HEK293T (cell line): ENCODE measurements at regions of chr4 and their contacts with region 1.

Region 1: GRCh38 chr4:42371306-42372252 is 25.7 kb upstream of the SHISA3 start:
- DNase-seq: peak; percentile 21

Region 2: GRCh38 chr4:42320822-42321388 is 50.7 kb before region 1 on chr4:
- CTCF ChIA-PET with region 1: no interaction called
- POLR2A ChIA-PET with region 1: no interaction called
- DNase-seq: no peak

Region 3: DNA sequence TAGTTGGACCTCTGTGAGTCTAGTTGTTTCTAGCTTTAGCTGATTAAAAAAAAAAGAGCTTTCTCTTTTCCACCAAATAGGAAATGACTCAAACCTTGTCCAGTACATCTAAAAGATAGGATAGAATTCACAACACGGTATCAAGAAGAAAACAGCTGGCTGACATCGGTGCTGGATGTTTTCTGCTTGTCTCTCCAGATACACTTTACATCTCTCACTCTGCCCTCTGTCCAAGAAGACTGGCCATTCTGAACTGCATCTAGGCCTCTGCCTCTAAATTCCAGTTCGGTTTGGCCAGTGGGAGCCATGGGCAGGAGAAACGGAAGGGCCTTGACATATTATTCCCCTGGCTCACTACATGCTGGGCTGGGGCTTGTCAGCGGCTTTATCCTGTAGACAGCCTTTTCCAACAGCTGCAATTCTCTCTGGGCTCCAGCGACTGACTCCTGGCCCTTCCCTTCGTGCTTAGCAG is 31.6 kb before region 1 on chr4:
- CTCF ChIA-PET with region 1: no interaction called
- POLR2A ChIA-PET with region 1: no interaction called
- DNase-seq: no peak

Region 4: DNA sequence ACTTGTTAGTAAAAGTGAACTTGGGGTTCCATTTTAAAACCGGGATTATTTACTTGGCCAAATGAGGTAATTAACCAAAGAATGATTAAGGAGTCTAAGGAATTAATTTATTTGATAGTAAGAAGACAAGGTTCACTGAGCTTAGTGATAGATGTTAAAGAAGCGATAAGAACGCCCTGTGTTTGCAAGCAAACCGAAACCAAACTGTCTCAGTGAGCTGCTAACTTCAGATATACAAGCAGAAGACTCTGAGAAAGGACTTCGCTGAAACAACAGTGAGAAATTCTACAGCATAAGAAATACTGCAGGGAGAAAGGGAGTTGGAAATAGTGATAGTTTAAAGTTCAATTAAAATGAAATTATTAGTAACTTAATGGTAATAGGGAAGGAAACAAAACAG is 11.9 kb before region 1 on chr4:
- CTCF ChIA-PET with region 1: no interaction called
- POLR2A ChIA-PET with region 1: no interaction called
- DNase-seq: no peak

Region 5: GRCh38 chr4:42519803-42520417 is 148.3 kb after region 1 on chr4:
- CTCF ChIA-PET with region 1: interaction called, 51 read pairs
- POLR2A ChIA-PET with region 1: interaction called, 3 read pairs
- DNase-seq: peak; percentile 31